ENCODE measurements at regions of chr9 and their contacts with region 1.

Region 1: DNA sequence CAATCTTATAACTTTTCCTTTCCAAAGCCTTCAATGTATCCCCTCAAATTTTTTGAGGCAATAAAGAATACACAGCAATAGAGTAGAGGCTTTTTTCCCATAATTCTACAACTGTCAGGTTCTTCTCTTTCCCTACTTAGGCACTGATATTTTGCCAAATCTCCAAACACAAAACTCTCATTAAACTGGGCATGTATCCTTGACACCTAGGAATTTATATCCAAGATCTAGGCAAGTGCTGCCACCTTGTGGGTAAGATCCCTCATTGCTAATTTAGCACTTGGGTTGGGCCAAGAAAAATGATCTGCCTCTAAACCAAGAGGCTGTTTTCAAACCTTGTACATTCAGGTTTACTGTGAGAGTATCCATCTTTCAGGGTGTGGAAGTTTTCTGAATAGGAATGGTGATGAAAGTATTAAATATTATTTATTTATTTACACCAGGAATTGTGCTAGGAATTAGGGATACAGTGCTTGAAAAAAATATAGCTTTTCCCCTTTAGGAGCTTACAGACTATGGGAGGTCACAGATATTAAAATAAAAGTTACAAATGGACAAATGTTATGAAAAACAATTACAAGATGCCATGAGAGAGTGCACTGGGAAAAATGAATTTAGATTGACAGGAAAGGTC is 17.6 kb downstream of the TSTD2 start:
- DNase-seq: peak; percentile 32 to 58 (median 43)
- H3K4me3 ChIP-seq: no peak overlapping the region
- H3K4me3 Mint-ChIP-seq: no peak overlapping the region
- H3K27ac ChIP-seq: no peak overlapping the region
- H3K27ac Mint-ChIP-seq: peak overlapping the region in 1 of 8 donors; percentile 3
- H3K4me1 ChIP-seq: no peaks in the 10 kb centered on the region
- H3K4me1 Mint-ChIP-seq: no peaks in the 10 kb centered on the region
- H3K27me3 ChIP-seq: no peaks in the 10 kb centered on the region
- H3K27me3 Mint-ChIP-seq: no peaks in the 10 kb centered on the region

Region 2: GRCh38 chr9:96854073-96854876 is 761.3 kb before region 1 on chr9 and contains the start of gene ZNF782:
- CTCF ChIA-PET with region 1: interaction called, 12 read pairs
- POLR2A ChIA-PET with region 1: no interaction called
- DNase-seq: peak; percentile 77 to 90 (median 79)
- H3K4me3 ChIP-seq: peak within 1 kb of the TSS; percentile 78
- H3K4me3 Mint-ChIP-seq: peak within 1 kb of the TSS; percentile 93 to 100 (median 100)
- H3K27ac ChIP-seq: peak within 1 kb of the TSS; percentile 60
- H3K27ac Mint-ChIP-seq: peak within 1 kb of the TSS; percentile 72 to 100 (median 99)
- H3K4me1 ChIP-seq: peaks cover 33% of the 10 kb centered on the region
- H3K4me1 Mint-ChIP-seq: peaks cover 43 to 59% (median 55%) of the 10 kb centered on the region in 3 donors
- H3K27me3 ChIP-seq: no peaks in the 10 kb centered on the region
- H3K27me3 Mint-ChIP-seq: peaks cover 2 to 6% of the 10 kb centered on the region in 2 donors
- total RNA-seq, gene ZNF782: 4.2 to 6.5 TPM

Region 3: DNA sequence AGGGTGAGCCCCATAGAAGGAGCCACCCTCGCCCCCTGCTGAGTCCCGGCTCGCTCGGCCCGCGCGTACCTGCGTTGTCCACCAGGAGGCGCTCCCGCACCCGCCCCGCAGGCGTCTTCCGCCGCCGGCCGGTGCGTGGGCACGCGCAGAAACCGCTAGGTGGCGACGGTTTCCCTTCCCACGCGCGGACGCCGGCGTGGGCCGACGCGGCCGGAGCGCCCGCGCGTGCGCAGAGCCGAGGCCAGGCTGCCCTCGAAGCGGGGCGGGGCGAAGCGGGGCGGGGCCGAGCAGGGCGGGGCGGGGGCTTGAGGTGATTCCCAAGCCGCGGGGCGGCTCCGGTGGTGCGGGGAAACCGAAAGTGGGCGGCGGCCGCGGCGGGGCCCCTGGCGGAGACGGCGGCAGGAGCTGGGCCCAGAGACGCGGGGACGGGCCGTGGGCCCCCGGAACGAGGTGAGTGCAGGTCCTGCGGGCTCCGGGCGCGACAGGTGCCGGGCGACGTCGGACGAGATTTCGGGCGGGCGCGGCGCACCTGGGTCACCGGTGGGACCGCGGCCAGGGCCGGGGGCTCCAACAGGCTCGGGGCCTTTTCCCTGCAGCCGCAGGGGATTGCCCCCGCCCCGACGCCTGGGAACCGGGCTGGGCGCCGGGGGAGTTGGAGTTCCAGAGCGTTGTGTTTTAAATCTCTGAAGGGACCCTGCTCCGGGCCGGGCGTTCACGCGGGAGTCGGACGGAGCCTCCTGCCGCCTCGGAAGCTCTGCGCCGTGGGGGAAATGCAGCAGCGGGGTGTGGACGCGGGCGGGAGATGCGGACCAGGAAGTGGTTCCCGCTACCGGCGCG is 203.5 kb before region 1 on chr9 and contains the start of gene TDRD7:
- CTCF ChIA-PET with region 1: interaction called, 21 read pairs
- POLR2A ChIA-PET with region 1: no interaction called
- DNase-seq: peak; percentile 88 to 92 (median 90)
- H3K4me3 ChIP-seq: peak within 1 kb of the TSS; percentile 47
- H3K4me3 Mint-ChIP-seq: peak within 1 kb of the TSS; percentile 81 to 92 (median 86)
- H3K27ac ChIP-seq: peak within 1 kb of the TSS; percentile 52
- H3K27ac Mint-ChIP-seq: peak within 1 kb of the TSS; percentile 52 to 95 (median 90)
- H3K4me1 ChIP-seq: peaks cover 19% of the 10 kb centered on the region
- H3K4me1 Mint-ChIP-seq: peaks cover 31 to 43% (median 35%) of the 10 kb centered on the region in 3 donors
- H3K27me3 ChIP-seq: peaks cover 4% of the 10 kb centered on the region
- H3K27me3 Mint-ChIP-seq: peaks cover 8 to 16% of the 10 kb centered on the region in 2 donors
- total RNA-seq, gene TDRD7: 5.4 to 6.1 TPM

Region 4: GRCh38 chr9:97468658-97469448 is 146.7 kb before region 1 on chr9:
- CTCF ChIA-PET with region 1: interaction called, 14 read pairs
- POLR2A ChIA-PET with region 1: no interaction called
- DNase-seq: peak in 3 of 5 donors; percentile 1 to 46 (median 5)
- H3K4me3 ChIP-seq: no peak overlapping the region
- H3K4me3 Mint-ChIP-seq: no peak overlapping the region
- H3K27ac ChIP-seq: no peak overlapping the region
- H3K27ac Mint-ChIP-seq: peak overlapping the region in 4 of 8 donors; percentile 25 to 75 (median 42)
- H3K4me1 ChIP-seq: no peaks in the 10 kb centered on the region
- H3K4me1 Mint-ChIP-seq: no peaks in the 10 kb centered on the region
- H3K27me3 ChIP-seq: no peaks in the 10 kb centered on the region
- H3K27me3 Mint-ChIP-seq: no peaks in the 10 kb centered on the region

Region 5: GRCh38 chr9:97632985-97633858 is 17.7 kb after region 1 on chr9 and contains the starts of genes NCBP1 and TSTD2:
- CTCF ChIA-PET with region 1: interaction called, 19 read pairs
- POLR2A ChIA-PET with region 1: interaction called, 8 read pairs
- DNase-seq: peak; percentile 90 to 98 (median 98)
- H3K4me3 ChIP-seq: peak within 1 kb of the TSS; percentile 75
- H3K4me3 Mint-ChIP-seq: peak within 1 kb of the TSS; percentile 95 to 99 (median 98)
- H3K27ac ChIP-seq: peak within 1 kb of the TSS; percentile 89
- H3K27ac Mint-ChIP-seq: peak within 1 kb of the TSS; percentile 99 to 100 (median 100)
- H3K4me1 ChIP-seq: peaks cover 46% of the 10 kb centered on the region
- H3K4me1 Mint-ChIP-seq: peaks cover 49 to 76% (median 69%) of the 10 kb centered on the region in 3 donors
- H3K27me3 ChIP-seq: no peaks in the 10 kb centered on the region
- H3K27me3 Mint-ChIP-seq: no peaks in the 10 kb centered on the region
- total RNA-seq, gene NCBP1: 47.7 to 49.6 TPM
- total RNA-seq, gene TSTD2: 13.8 to 14.7 TPM

Region 6: DNA sequence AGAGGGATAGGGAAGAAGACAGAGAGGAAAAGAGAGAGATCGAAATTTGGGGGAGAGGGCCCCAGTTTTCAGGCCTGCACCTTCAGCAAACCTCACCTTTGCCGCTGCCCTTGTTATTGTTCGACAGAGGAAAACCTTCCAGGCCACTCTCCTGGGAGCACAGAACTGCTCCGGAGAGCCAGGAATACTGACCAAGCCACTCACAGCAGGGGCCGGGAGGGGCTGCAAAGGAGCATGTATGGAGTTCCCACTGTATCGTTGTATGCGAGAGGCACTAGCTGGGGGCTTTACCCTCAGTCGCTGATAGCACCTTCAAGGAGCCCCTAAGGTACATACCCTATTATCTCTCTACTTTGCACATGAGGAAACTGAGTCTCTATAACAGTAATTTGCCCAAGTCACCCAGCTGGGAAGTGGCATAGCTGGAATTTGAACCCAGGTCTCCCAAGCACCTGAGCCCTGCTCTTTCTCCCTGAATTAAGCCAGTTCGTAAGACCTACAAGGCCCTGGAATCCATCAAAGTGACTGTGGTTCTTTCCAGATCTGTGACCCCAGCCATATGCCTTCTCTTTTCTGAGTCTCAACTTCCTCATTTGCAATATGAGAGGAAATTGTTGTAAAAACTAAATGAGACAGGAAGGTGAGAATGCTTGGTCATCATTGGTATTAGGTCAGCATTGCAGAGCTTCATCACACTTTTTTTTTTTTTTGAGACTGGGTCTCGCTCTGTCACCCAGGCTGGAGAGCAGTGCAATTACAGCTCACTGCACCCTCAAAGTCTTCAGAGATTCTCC is 216.5 kb after region 1 on chr9:
- CTCF ChIA-PET with region 1: no interaction called
- POLR2A ChIA-PET with region 1: no interaction called
- DNase-seq: no peak
- H3K4me3 ChIP-seq: no peak overlapping the region
- H3K4me3 Mint-ChIP-seq: no peak overlapping the region
- H3K27ac ChIP-seq: no peak overlapping the region
- H3K27ac Mint-ChIP-seq: no peak overlapping the region
- H3K4me1 ChIP-seq: no peaks in the 10 kb centered on the region
- H3K4me1 Mint-ChIP-seq: no peaks in the 10 kb centered on the region
- H3K27me3 ChIP-seq: no peaks in the 10 kb centered on the region
- H3K27me3 Mint-ChIP-seq: peaks cover 13 to 48% of the 10 kb centered on the region in 2 donors

Measured in CD8-positive, alpha-beta memory T cell (primary cell).